Gastrocnemius medialis (tissue), 4 donors: ENCODE measurements at regions of chr1 and their contacts with region 1.

Region 1: DNA sequence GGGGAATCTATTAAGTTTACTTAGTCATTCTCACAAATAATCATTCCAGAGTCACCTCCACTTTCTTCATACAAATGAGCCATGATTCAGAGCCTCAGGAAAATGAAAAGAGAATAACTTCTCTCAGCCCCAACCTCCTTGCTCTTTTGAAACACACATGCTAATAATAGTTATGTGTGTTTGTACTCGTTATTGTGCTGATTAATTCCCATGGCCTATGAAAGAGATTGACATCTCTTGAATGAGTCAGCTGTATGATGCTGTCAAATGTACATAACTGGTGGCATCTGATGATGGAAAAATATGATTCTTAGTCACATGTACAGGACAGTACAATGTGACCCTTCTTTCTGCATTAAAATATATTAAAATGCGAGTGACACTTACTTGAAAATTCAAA is 41.5 kb downstream of the DTL start:
- DNase-seq: no peak
- ATAC-seq: peak; percentile 35 to 38
- H3K4me3 ChIP-seq: no peak overlapping the region
- H3K27ac ChIP-seq: peak overlapping the region; percentile 51 to 91 (median 72)
- H3K4me1 ChIP-seq: peaks cover 18 to 28% of the 10 kb centered on the region in 2 donors
- H3K27me3 ChIP-seq: no peaks in the 10 kb centered on the region
- CTCF ChIP-seq: no peak
- POLR2A ChIP-seq: no peak

Region 2: DNA sequence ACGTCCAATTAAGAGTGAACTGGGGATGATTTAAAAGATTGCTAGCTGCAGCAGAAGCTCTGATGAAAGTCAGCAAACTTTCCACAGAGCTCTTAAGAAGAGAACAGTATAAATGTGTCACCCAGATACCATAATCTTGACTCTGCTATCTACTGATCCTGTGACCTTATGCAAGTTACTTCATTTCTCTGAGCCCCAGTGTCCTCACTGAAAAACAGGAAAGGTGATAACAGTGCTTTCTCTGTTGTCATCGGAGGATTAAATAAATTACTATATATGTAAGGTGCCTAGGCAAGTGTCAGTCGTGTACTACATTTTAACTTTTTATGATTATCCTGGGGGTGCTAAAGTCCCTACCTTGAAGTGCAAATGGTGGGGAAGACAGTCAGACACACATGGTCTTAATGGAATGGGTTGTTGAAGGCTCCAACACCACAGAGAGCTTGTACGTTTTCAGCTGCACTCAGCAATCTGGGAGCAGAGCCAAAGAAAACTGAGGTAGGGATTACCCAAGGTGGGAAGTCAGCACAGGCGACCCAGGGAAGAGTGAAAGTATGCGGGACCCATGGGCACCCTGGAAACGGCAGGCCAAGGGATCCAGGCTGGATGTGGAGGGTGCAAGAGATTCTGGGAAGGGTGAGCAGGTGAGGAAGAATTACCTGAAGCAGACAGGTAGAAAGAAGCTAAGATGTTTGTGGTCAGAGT is 41.3 kb after region 1 on chr1:
- in situ Hi-C with region 1: no loop called
- intact Hi-C with region 1: loop called (anchors 2 kb)
- DNase-seq: no peak
- ATAC-seq: no peak
- H3K4me3 ChIP-seq: no peak overlapping the region
- H3K27ac ChIP-seq: peak overlapping the region; percentile 84 to 94 (median 88)
- H3K4me1 ChIP-seq: peaks cover 30 to 38% of the 10 kb centered on the region in 2 donors
- H3K27me3 ChIP-seq: no peaks in the 10 kb centered on the region
- CTCF ChIP-seq: no peak
- POLR2A ChIP-seq: no peak

Region 3: GRCh38 chr1:212234431-212235395 is 157.7 kb after region 1 on chr1:
- in situ Hi-C with region 1: no loop called
- intact Hi-C with region 1: loop called (anchors 2 kb)
- DNase-seq: peak; percentile 74 to 82
- ATAC-seq: peak; percentile 96 to 97
- H3K4me3 ChIP-seq: no peak overlapping the region
- H3K27ac ChIP-seq: peak overlapping the region; percentile 80 to 90 (median 87)
- H3K4me1 ChIP-seq: peaks cover 35 to 51% of the 10 kb centered on the region in 2 donors
- H3K27me3 ChIP-seq: no peaks in the 10 kb centered on the region
- CTCF ChIP-seq: no peak
- POLR2A ChIP-seq: no peak

Region 4: DNA sequence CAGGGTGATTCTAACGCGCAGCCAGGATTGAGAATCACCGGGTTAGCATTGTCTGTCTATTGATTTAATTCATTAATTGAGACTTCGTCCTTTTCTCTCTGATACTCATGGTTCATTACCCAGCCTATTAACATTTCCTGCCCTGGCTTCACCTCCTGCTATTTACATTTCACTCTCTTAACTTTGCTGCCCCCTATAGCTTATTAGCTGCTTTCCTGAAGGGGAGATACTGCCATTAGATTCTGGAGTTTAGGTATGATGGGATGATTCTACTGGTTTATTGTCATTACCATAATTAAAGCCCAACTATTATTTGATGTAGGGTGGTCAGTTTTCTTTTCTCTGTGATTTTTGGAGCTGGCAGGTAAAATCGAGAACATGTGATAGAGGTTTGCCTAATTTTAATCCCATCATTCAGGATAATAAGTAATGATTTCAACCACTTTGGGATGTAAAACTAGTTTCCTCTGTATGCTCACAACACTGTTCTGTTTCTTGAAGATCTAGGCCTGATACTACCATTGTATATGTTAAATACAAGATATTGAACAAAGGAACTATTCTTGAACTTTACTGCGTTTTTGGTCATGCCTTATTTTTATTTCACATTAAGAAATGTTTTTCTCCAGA is 214.6 kb after region 1 on chr1:
- in situ Hi-C with region 1: loop called in 2 of 4 experiments (anchors 5 kb)
- intact Hi-C with region 1: loop called (anchors 1 kb)
- DNase-seq: no peak
- ATAC-seq: peak; percentile 57 to 66
- H3K4me3 ChIP-seq: no peak overlapping the region
- H3K27ac ChIP-seq: peak overlapping the region; percentile 10 to 98 (median 28)
- H3K4me1 ChIP-seq: peaks cover 85 to 89% of the 10 kb centered on the region in 2 donors
- H3K27me3 ChIP-seq: no peaks in the 10 kb centered on the region
- CTCF ChIP-seq: peak; percentile 39 to 73 (median 57)
- POLR2A ChIP-seq: no peak

Region 5: GRCh38 chr1:212608209-212608955 is 531.3 kb after region 1 on chr1 and contains the start of gene ATF3:
- in situ Hi-C with region 1: no loop called
- intact Hi-C with region 1: loop called (anchors 2 kb)
- DNase-seq: peak; percentile 100
- ATAC-seq: peak; percentile 81 to 93
- H3K4me3 ChIP-seq: peak within 1 kb of the TSS; percentile 76 to 92 (median 80)
- H3K27ac ChIP-seq: peak within 1 kb of the TSS; percentile 90 to 95 (median 93)
- H3K4me1 ChIP-seq: peaks cover 14 to 22% of the 10 kb centered on the region in 2 donors
- H3K27me3 ChIP-seq: peaks cover 21 to 39% (median 31%) of the 10 kb centered on the region in 3 donors
- CTCF ChIP-seq: no peak
- POLR2A ChIP-seq: peak; percentile 99
- total RNA-seq, gene ATF3: 1.9 to 7.4 (median 7.2) TPM